Caco-2 (cell line): ENCODE measurements at regions of chr3 and their contacts with region 1.

Region 1: GRCh38 chr3:129224984-129225393 is 24.4 kb upstream of the COPG1 start:
- DNase-seq: peak; percentile 54 to 56
- H3K4me3 ChIP-seq: peak overlapping the region; percentile 21
- H3K4me3 Mint-ChIP-seq: peak overlapping the region; percentile 65
- H3K27ac Mint-ChIP-seq: no peak overlapping the region
- H3K4me1 ChIP-seq: peaks cover 9% of the 10 kb centered on the region
- H3K4me1 Mint-ChIP-seq: peaks cover 7% of the 10 kb centered on the region
- H3K27me3 ChIP-seq: no peaks in the 10 kb centered on the region
- H3K27me3 Mint-ChIP-seq: no peaks in the 10 kb centered on the region
- CTCF ChIP-seq: no peak

Region 2: DNA sequence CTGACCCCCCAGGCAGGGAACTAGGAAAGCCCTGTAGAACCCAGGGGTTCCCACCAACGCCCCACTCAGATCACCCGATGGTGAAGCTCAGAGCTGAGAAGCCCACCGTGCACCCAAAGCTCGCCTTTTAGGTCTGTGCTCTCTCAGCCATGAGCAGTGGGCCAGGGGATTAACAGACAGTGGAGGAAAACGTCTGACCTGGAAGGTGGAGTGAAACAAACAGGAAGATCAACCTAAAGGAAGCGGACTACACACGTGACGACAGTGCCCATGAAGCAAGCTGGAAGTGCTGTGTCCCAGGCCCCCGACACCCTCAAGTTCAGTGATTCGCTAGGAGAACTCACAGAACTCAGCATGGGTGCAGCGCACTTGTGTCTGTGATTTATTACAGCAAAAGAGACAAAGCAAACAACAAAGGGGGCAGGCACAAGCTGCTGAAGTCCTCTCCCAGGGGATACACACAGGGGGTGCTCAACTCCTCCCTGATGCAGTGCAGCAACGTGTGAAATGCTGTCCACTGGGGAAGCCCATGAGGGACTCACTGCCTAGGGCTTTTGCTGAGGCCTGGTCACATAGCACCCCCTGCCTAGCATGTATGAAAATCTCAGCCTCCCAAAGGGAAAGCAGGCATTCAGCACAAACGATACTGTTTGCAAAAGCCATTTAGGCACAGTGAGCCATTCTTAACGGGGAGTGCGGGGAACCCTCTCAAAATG is 274.6 kb before region 1 on chr3:
- CTCF ChIA-PET with region 1: no interaction called
- POLR2A ChIA-PET with region 1: no interaction called
- intact Hi-C with region 1: no loop called
- DNase-seq: peak; percentile 47 to 49
- H3K4me3 ChIP-seq: no peak overlapping the region
- H3K4me3 Mint-ChIP-seq: no peak overlapping the region
- H3K27ac Mint-ChIP-seq: no peak overlapping the region
- H3K4me1 ChIP-seq: no peaks in the 10 kb centered on the region
- H3K4me1 Mint-ChIP-seq: no peaks in the 10 kb centered on the region
- H3K27me3 ChIP-seq: no peaks in the 10 kb centered on the region
- H3K27me3 Mint-ChIP-seq: no peaks in the 10 kb centered on the region
- CTCF ChIP-seq: peak in 1 of 2 experiments; percentile 46

Region 3: GRCh38 chr3:129183569-129184395 is 41.2 kb before region 1 on chr3 and contains the start of gene CNBP:
- CTCF ChIA-PET with region 1: interaction called, 3 read pairs
- POLR2A ChIA-PET with region 1: interaction called, 10 read pairs
- intact Hi-C with region 1: no loop called
- DNase-seq: peak; percentile 88 to 94
- H3K4me3 ChIP-seq: peak within 1 kb of the TSS; percentile 81
- H3K4me3 Mint-ChIP-seq: peak within 1 kb of the TSS; percentile 84
- H3K27ac Mint-ChIP-seq: peak within 1 kb of the TSS; percentile 94
- H3K4me1 ChIP-seq: peaks cover 14% of the 10 kb centered on the region
- H3K4me1 Mint-ChIP-seq: no peaks in the 10 kb centered on the region
- H3K27me3 ChIP-seq: no peaks in the 10 kb centered on the region
- H3K27me3 Mint-ChIP-seq: no peaks in the 10 kb centered on the region
- CTCF ChIP-seq: no peak
- total RNA-seq, gene CNBP: 229 and 266 TPM in 2 replicates